ENCODE measurements at regions of chr4 and their contacts with region 1.

Region 1: DNA sequence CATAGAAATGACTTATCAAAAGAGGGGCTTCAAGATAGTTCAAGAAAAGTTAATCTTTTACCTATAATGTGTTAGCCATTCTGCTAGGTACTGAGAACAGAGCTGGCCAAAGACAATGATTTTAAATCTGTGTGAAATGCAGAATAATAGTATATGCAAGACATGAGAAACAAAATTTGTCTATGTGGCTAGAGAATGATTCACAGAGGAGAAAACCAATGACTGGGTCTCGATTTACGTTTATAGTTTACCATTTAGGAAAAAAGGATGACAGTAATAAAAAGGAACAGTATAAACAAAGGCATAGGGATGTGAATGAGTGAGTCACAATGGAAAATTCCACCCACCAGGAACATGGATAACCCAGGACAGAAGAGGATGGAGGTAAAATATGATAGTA is 31.9 kb downstream of the NPFFR2 start:
- DNase-seq: no peak
- ATAC-seq: no peak
- H3K4me3 ChIP-seq: no peak overlapping the region
- H3K27ac ChIP-seq: no peak overlapping the region
- H3K4me1 ChIP-seq: no peaks in the 10 kb centered on the region
- H3K27me3 ChIP-seq: no peaks in the 10 kb centered on the region
- CTCF ChIP-seq: no peak
- POLR2A ChIP-seq: no peak

Region 2: DNA sequence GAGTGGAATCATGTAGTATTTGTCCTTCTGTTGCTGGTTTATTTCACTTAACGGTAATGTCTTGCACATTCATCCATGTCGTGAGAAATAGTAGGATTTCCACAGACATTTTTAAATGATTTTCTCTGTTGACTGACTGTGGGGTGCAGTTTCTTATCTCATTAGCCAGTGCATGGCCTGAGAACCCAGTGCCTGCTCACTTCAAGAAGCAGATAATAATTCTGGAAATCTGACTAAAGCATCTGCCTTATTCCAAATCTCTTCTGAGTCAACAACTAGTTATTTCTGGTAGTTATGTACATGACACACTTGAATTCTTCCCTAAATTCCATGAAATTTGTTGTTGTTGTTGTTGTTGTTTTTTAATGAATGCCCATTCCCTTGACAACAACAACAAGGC is 45.6 kb after region 1 on chr4:
- in situ Hi-C with region 1: no loop called
- intact Hi-C with region 1: no loop called
- DNase-seq: no peak
- ATAC-seq: no peak
- H3K4me3 ChIP-seq: no peak overlapping the region
- H3K27ac ChIP-seq: no peak overlapping the region
- H3K4me1 ChIP-seq: no peaks in the 10 kb centered on the region
- H3K27me3 ChIP-seq: no peaks in the 10 kb centered on the region
- CTCF ChIP-seq: no peak
- POLR2A ChIP-seq: no peak

Region 3: DNA sequence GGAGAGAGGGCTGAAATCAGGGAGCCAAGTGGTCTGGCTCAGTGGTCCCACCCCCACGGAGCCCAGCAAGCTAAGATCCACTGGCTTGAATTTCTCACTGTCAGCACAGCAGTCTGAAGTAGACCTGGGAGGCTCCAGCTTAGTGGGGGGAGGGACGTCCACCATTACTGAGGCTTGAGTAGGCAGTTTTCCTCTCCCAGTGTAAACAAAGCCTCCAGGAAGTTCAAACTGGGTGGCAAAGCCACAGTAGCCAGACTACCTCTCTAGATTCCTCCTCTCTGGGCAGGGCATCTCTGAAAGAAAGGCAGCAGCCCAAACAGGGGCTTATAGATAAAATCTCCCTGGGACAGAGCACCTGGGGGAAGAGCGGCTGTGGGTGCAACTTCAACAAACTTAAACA is 56.2 kb after region 1 on chr4:
- in situ Hi-C with region 1: loop called in 1 of 4 experiments (anchors 10 kb)
- intact Hi-C with region 1: no loop called
- DNase-seq: no peak
- ATAC-seq: no peak
- H3K4me3 ChIP-seq: no peak overlapping the region
- H3K27ac ChIP-seq: no peak overlapping the region
- H3K4me1 ChIP-seq: no peaks in the 10 kb centered on the region
- H3K27me3 ChIP-seq: no peaks in the 10 kb centered on the region
- CTCF ChIP-seq: no peak
- POLR2A ChIP-seq: no peak

Measured in gastrocnemius medialis (tissue), 4 donors.